Posterior vena cava (tissue), 2 donors: ENCODE measurements at regions of chr2 and their contacts with region 1.

Region 1: DNA sequence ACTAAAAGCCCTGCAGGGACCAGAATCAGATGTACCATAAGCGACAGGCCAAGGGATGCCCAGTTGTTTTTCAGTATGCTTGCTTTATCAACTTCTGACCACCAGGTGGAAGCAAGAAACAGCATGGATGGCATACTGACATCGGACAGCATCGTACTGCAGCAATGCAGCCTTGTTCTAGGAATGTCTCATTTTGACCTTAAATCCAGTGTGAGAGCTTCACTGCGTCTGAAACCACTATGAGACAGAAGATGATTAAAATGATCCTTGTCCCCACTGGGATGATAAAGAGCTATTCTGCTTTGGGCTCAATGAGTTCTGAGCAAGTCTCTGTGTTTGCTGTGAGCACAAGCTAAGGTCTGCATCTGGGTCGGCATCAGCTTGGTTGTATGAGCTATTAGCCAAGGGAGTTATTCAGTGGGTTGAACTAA is 54.3 kb downstream of the CDK15 start:
- DNase-seq: no peak

Region 2: GRCh38 chr2:201795607-201796477 is 64.8 kb before region 1 on chr2:
- intact Hi-C with region 1: loop called in 1 of 2 experiments (anchors 5 kb)
- DNase-seq: no peak

Region 3: DNA sequence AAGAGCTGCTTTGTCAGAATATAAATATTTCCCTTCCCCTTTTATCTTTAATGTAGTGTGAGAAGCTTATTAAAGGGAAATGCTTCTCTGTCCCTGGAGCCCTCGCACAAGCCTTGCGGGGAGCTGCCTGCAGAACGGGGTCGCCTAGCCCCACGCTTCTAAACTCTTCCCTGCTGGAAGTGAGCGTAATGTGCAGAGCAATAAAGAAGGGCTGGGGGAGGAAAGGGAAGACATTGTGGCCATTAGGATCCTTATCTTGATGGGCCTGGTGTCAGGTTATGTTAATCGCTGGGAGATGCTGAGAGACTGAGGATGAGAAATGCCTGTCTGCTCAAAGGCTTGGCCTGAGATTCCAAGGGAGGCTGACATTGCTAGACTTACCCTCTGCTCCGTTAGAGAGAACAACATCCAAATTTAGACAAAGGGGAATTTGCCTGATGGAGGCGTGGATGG is 154.1 kb after region 1 on chr2:
- intact Hi-C with region 1: no loop called
- DNase-seq: no peak

Region 4: GRCh38 chr2:202034249-202035088 is 173.8 kb after region 1 on chr2:
- intact Hi-C with region 1: loop called in 1 of 2 experiments (anchors 5 kb)
- DNase-seq: no peak

Region 5: GRCh38 chr2:202178342-202178958 is 317.8 kb after region 1 on chr2:
- intact Hi-C with region 1: loop called (anchors 5 to 10 kb)
- DNase-seq: no peak